ENCODE measurements at regions of chr16 and their contacts with region 1.

Region 1: DNA sequence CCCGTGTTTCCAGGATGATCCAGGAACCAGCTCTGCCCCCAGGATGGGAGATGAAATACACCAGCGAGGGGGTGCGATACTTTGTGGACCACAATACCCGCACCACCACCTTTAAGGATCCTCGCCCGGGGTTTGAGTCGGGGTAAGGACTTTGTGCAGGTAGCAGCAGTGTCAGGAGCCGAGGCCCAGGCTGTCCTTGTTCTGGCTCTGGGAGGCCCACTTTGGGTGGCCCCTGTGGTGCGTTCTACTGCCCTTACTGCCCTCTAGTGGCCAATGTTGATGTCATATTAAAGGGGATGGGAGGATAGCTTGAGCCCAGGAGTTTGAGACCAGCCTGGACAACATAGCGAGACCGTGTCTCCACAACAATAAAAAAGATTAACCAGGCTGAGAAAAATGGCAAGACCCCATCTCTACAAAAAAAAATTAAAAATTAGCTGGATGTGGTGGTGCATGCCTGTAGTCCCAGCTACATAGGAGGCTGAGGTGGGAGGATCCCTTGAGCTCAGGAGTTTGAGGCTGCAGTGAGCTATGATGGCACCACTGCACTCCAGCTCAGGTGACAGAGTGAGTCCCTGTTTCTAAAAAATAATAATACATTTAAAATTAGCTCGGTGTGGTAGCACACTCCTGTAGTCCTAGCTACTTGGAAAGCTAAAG is 20.9 kb upstream of the CLEC18A start:
- DNase-seq: no peak

Region 2: GRCh38 chr16:68719993-68720489 is 1210.2 kb before region 1 on chr16:
- intact Hi-C with region 1: loop called in 1 of 2 experiments (anchors 10 kb)
- DNase-seq: no peak

Region 3: GRCh38 chr16:69784586-69784985 is 145.7 kb before region 1 on chr16:
- intact Hi-C with region 1: no loop called
- DNase-seq: no peak

Region 4: DNA sequence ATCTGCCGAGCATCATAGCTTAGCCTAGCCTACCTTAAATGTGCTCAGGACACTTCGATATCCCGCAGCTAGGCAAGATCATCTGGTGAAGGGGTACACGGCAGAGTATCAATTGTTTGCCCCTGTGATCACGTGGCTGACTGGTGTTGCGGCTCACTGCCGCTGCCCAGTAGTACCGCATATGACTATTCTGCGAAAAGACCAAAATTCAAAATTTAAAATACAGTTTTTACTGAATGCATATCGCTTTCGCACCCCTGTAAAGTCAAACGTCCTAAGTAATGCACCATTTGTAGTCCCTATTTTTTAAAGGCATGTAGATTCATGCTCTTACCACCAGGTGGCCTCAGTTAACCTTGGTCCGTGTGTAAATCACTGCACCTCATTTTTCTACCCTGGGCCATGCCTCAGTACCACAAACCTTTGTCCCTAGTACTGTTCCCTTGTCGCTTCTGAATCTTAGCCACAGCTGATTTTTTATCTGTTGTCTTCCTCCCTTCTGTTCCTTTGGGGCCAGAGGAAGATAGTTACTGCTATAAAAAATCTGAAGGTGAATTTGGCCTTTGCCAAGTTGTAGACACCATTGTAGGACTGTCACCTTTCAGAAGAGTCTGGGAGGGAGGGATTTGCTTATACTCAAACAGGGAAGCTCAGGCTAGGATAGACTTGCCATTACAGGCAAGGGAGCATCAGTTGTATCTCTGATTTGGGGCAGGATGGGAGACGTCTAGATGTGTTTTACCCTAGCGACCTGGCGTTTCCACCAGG is 133.7 kb before region 1 on chr16:
- intact Hi-C with region 1: loop called (anchors 2 to 5 kb)
- DNase-seq: no peak

Region 5: GRCh38 chr16:70653809-70654771 is 723.8 kb after region 1 on chr16:
- intact Hi-C with region 1: no loop called
- DNase-seq: peak; percentile 88